Prostate gland (tissue), 2 donors: ENCODE measurements at regions of chr1 and their contacts with region 1.

Region 1: DNA sequence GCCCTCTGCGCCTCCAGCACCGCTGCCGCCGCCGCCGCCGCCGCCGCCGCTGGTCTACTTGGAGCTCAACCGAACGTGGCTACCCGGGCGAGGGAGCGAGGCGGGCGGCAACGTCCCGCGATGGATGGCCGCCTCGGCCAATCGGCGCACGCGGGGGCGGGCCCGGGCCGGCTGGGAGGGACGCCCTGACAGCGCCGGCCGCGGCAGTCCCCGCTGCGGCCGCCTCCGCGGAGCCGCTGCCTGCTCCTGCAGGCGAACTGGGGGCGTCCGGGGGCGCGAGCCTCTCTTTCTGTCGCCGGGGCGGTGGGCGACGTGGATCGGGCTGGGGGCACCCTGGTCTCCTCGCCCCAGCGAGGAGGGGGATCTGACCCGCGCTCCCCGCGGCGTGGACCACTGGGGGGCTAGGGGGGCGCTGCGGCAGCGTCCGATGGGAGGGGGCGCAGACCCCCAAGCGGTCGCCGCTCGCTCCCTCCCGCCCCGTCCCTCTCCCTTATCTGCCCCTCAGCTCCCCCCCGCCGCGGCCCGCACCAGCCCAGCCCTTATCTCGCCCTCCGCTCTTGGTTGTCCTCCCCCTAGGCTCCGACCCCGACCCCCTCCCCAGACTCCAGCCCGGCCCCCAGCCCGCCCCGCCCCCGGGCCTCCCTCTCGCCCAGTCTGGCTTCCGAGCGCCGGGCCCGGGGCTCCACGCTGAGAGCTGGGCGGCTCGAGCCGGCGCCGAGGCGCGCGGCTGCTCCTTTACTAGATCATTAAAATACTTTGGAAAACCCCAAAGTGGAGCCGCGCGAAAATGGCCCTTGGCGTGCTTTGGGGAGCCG is at the start of gene SSBP3:
- DNase-seq: peak; percentile 91
- H3K4me3 ChIP-seq: peak within 1 kb of the TSS; percentile 81 to 95
- H3K27ac ChIP-seq: peak within 1 kb of the TSS; percentile 92 to 94
- H3K4me1 ChIP-seq: peaks cover 7% of the 10 kb centered on the region
- H3K27me3 ChIP-seq: no peaks in the 10 kb centered on the region
- CTCF ChIP-seq: peak in 3 of 4 experiments; percentile 12 to 37 (median 32)
- POLR2A ChIP-seq: peak; percentile 95
- total RNA-seq, gene SSBP3: 45.0 to 94.4 TPM

Region 2: DNA sequence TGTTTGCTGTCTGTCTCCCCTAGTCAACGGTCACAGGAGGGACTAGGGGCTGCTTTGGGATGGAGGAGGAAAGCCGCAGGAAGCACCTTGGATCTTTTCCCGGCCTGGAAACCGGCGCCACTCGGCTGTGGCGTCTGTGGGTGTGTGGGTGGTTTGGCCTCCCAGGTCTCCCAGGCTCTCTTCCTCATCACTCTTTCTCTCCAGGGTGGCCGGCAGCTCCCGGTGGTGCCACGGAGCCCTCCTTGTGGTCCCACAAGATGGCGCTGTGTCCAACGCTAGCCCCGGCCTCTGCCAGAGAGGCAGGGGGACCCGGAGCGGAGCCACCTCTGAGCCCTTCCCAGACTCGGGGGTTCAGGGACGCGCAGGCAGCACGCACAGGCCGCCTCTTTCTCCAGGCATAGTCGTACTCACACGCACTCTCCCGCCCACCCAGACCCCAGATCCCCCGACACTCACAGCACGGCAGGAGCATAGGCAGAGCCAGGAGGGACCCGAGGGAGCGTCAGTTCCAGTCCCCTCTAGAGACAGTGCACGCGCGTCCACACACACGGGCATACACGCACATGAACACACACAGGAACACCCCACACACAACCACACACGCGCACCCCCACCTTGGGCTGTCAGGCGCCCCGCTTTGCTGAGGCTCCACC is 284.9 kb before region 1 on chr1:
- intact Hi-C with region 1: loop called (anchors 5 kb)
- DNase-seq: peak; percentile 76
- H3K4me3 ChIP-seq: peak overlapping the region in 1 of 2 donors; percentile 20
- H3K27ac ChIP-seq: no peak overlapping the region
- H3K4me1 ChIP-seq: peaks cover 3% of the 10 kb centered on the region
- H3K27me3 ChIP-seq: no peaks in the 10 kb centered on the region
- CTCF ChIP-seq: peak; percentile 36 to 88 (median 80)
- POLR2A ChIP-seq: no peak

Region 3: GRCh38 chr1:54273092-54273794 is 133.3 kb before region 1 on chr1:
- intact Hi-C with region 1: loop called (anchors 2 kb)
- DNase-seq: no peak
- H3K4me3 ChIP-seq: no peak overlapping the region
- H3K27ac ChIP-seq: peak overlapping the region; percentile 80 to 86
- H3K4me1 ChIP-seq: peaks cover 44% of the 10 kb centered on the region
- H3K27me3 ChIP-seq: no peaks in the 10 kb centered on the region
- CTCF ChIP-seq: no peak
- POLR2A ChIP-seq: no peak

Region 4: DNA sequence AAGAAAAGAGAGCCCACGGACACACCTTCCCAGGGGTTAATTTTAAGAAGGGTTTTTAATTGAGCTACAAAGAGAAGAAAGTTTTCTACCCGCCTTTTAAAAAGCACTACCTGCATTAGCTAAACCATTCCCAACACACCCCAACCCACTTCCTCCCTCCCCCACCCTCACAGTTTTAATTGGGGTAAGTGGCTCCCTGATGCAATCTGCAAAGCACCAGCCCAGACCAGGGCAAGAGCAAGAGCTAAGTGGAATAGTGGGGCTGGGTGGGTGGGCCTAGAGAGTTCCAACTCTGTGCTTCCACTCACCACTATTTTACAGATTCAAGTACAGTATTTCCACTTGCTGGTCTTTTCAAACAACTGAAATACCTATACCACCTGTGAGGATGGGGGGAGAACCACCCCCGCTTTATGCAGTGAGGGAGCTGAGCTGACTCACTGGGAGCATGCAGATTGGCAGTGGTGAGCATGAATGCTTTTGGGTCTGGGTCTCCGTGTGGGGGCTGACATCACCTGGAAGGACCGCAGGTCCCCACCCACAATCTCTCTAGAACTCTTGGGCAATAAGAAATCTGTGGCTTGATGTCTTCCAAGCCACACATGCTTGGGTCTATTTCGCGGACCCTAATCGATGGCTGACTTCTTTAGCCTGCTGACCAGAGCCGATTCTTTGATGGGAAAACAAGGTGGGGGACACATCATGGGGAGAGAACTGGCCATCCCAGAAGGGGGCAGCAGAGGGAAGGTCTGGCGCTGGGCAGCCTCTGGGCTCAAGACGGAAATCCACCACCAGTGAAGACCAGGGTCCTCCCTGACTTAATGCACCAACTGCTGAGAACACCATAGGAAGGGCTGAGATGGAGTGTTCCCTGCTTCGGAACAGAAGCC is 95.9 kb before region 1 on chr1:
- intact Hi-C with region 1: loop called (anchors 5 kb)
- DNase-seq: no peak
- H3K4me3 ChIP-seq: no peak overlapping the region
- H3K27ac ChIP-seq: no peak overlapping the region
- H3K4me1 ChIP-seq: peaks cover 41% of the 10 kb centered on the region
- H3K27me3 ChIP-seq: no peaks in the 10 kb centered on the region
- CTCF ChIP-seq: peak in 3 of 4 experiments; percentile 30 to 57 (median 33)
- POLR2A ChIP-seq: no peak

Region 5: DNA sequence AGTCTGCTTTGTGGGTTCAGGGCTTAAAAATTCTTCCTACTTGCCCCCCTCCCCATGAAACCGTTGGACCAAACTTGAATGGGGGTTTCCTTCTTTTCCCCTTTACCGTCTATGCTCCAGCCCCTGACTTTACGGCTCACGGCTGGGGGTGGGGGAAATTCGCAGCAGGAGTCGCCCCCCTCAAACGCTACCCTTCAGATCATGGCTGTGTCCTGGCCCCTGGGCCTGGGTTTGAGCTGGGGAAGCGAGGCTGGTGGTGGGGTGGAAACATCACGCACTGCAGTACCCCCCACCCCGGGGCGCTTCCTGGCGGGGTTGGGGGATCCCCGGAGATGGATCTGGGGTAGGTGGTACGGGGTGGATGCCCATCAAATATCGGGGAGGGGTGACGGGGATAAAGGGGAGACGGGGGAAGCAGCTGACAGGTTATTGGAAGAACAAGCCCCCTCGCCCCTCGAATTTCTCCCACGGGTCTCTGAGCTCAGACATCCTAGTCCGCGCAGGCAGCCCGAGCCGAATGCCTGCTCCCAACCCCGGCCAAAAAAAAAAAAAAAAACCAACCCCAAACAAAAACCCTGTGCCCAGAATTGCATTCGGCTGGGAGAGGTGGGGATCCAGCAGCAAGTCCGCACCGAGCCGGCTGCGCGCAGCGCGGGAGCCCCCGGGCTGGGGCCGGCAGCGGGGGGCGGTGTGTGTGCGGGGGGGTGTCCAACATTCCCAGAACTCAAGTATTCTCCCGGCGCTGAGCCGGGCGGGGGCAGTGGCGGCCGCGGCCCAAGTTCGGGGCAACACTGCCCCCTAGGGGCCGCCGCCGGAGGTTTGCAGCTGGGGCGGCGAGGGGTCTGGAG is 82.5 kb after region 1 on chr1:
- intact Hi-C with region 1: loop called (anchors 1 kb)
- DNase-seq: peak; percentile 69
- H3K4me3 ChIP-seq: peak overlapping the region; percentile 52 to 54
- H3K27ac ChIP-seq: peak overlapping the region; percentile 83 to 92
- H3K4me1 ChIP-seq: peaks cover 4% of the 10 kb centered on the region
- H3K27me3 ChIP-seq: no peaks in the 10 kb centered on the region
- CTCF ChIP-seq: peak; percentile 97 to 98 (median 98)
- POLR2A ChIP-seq: peak; percentile 12

Region 6: DNA sequence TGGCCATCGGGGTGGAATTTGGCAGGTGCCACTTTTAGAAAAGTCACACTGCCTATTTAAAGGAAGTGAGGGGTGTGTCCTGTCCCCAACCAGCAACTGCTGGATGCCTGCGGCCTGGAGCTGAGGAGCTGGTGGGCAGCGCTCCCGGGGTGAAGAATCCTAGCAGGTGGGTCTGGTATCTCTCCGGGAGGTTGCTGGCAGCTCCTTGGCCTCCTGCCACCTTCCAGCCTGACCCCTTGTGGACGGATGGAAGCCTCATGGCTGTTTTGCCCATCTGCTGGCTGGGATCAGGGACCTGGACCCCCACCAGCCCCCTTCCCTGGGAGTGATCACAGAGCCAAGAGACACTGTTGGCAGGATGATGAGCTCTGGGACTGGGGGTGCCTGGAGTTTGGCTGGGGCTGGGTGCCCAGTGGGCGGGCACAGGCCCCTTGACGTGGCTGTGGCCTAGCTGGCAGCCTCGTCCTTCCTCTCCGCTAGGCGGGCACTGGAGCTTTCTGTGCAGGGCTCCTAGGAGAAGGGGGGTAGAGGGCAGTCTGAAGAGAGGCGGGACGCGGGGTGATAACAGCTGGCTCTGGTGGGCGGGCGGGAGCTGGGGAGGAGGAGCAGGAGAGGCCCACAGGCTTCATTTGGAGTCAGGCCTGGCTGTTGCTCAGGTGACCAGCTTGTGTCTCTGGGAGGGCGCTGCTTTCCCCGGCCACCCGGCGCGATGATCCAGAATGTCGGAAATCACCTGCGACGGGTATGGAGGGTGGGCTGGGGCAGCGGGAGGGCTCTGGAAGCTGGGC is 141.2 kb after region 1 on chr1 and contains the start of gene ACOT11:
- intact Hi-C with region 1: loop called (anchors 5 kb)
- DNase-seq: peak; percentile 77
- H3K4me3 ChIP-seq: peak within 1 kb of the TSS; percentile 19 to 20
- H3K27ac ChIP-seq: peak within 1 kb of the TSS; percentile 70 to 78
- H3K4me1 ChIP-seq: no peaks in the 10 kb centered on the region
- H3K27me3 ChIP-seq: no peaks in the 10 kb centered on the region
- CTCF ChIP-seq: peak in 2 of 4 experiments; percentile 53 to 84
- POLR2A ChIP-seq: peak; percentile 32
- total RNA-seq, gene ACOT11: 6.7 to 18.6 TPM